Mammary epithelial cell (primary cell): ENCODE measurements at regions of chr7 and their contacts with region 1.

Region 1: GRCh38 chr7:139645572-139646523 is 122.4 kb downstream of the CLEC2L start:
- DNase-seq: peak; percentile 57
- H3K4me3 ChIP-seq: no peak overlapping the region
- H3K27ac ChIP-seq: no peak overlapping the region
- H3K4me1 ChIP-seq: peaks cover 5% of the 10 kb centered on the region
- H3K27me3 ChIP-seq: no peaks in the 10 kb centered on the region
- CTCF ChIP-seq: peak; percentile 85 to 94

Region 2: DNA sequence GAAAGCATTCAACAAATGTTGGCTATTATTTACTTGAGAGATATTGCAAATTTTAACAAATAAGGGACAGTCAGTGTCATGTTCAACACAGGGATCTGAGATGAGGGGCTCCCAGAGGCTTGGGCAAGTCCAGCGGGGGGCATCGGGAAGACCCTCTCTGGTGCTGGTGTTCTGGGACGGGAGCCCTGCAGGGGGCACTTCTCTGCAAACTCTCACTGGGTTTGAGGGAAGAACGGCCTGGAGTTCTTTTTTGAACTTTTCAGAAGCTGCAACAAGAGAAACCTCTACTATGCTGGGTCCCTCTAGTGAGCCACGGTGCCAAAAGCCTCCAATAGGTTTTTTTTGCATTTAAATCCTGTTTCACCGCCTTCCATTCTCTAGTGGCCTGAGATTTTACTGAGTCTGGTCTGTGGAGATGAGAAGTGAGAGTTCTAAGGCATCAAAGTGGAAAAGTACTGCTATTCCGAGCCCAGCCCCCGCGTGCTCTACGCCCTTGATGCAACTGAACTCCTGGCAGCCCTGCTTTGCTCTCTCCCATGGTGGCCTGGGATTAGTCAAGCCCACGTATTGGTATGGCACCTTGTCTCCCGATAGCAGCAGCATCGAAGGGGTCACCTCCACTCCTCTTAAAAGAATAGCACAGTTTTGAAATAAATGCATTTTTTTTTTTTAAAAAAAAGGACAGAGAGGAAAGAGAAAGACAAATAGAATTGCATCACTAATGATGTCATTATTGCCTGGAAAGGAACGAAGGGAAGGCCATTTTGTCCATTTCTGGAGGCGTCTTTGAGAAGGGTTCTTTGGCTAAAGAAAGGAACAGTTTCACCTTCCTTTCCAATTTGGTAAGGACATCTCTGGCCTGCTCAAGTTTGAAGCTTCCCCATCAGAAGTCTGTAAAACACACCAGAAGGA is 78.9 kb before region 1 on chr7:
- CTCF ChIA-PET with region 1: no interaction called
- dilution Hi-C with region 1: loop called (anchors 5 kb)
- in situ Hi-C with region 1: no loop called
- intact Hi-C with region 1: no loop called
- DNase-seq: no peak
- H3K4me3 ChIP-seq: no peak overlapping the region
- H3K27ac ChIP-seq: no peak overlapping the region
- H3K4me1 ChIP-seq: no peaks in the 10 kb centered on the region
- H3K27me3 ChIP-seq: no peaks in the 10 kb centered on the region
- CTCF ChIP-seq: no peak

Region 3: DNA sequence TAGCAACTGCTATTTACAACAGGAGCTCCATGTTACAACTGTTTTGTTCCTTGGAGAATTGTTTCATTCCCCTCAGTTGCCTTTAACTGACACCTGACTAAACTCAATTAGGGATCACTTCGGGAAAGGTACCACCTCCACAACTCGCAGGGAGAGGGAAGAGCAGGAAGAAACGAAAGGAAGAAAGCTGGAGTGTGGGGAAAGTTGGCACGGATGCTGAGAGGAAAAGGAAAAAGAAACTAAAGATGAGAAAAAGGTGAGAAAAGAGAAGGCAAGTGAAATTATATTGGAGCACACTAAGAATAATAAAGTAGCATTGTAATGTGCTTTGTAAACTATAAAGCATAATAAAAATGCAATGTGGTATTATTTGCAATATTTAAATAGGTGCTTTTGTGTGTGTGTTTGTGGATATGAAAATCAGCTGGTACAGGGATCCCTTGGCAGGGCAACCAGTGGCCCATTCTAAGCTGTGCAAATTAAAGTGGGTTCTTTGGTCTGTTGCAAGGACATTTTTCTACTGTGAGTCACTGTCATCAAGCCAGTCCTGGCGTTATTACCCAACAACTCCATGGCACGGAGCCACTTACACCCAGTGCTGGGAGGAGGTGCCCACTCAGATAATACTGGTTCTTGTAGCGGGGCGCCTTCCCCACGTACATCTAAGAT is 86.1 kb after region 1 on chr7:
- CTCF ChIA-PET with region 1: no interaction called
- dilution Hi-C with region 1: no loop called
- in situ Hi-C with region 1: no loop called
- intact Hi-C with region 1: loop called (anchors 5 kb)
- DNase-seq: peak; percentile 87
- H3K4me3 ChIP-seq: peak overlapping the region in 2 of 3 experiments; percentile 15 to 28
- H3K27ac ChIP-seq: peak overlapping the region; percentile 55
- H3K4me1 ChIP-seq: peaks cover 67% of the 10 kb centered on the region
- H3K27me3 ChIP-seq: no peaks in the 10 kb centered on the region
- CTCF ChIP-seq: no peak

Region 4: GRCh38 chr7:139753081-139753692 is 107.3 kb after region 1 on chr7:
- CTCF ChIA-PET with region 1: no interaction called
- dilution Hi-C with region 1: no loop called
- in situ Hi-C with region 1: no loop called
- intact Hi-C with region 1: no loop called
- DNase-seq: no peak
- H3K4me3 ChIP-seq: no peak overlapping the region
- H3K27ac ChIP-seq: no peak overlapping the region
- H3K4me1 ChIP-seq: no peaks in the 10 kb centered on the region
- H3K27me3 ChIP-seq: no peaks in the 10 kb centered on the region
- CTCF ChIP-seq: peak in 1 of 2 donors; percentile 9

Region 5: DNA sequence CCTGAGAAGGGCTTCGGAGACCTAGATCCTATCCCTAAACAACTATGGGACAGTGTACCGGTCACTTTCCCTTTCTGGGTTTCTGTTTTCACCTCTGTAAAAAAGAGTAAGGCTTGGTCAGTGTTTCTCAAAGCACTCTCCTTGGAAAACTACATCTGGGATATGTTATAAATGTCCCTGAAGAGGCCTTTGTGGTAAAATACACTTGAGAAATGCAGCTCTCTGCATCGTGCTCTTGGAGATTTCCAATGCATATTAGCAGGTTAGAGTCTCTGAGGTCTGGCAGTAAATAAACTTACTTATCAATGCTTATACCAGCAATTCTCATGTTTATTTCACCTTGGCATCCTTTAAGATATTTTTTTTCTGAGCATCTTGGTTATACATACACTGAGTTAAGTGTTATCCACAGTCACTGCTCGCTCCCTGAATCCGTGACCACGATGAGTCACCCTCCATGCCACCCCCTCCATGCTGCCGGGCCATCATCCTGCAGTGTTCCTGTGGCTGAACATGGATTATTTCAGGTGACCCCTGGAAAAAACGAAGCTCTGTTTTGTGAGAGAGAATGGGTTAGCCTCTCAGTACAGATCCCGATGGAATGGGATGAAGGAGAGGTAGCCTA is 179.9 kb after region 1 on chr7:
- CTCF ChIA-PET with region 1: no interaction called
- dilution Hi-C with region 1: no loop called
- in situ Hi-C with region 1: no loop called
- intact Hi-C with region 1: loop called (anchors 1 kb)
- DNase-seq: peak; percentile 49
- H3K4me3 ChIP-seq: no peak overlapping the region
- H3K27ac ChIP-seq: no peak overlapping the region
- H3K4me1 ChIP-seq: peaks cover 8% of the 10 kb centered on the region
- H3K27me3 ChIP-seq: no peaks in the 10 kb centered on the region
- CTCF ChIP-seq: no peak

Region 6: DNA sequence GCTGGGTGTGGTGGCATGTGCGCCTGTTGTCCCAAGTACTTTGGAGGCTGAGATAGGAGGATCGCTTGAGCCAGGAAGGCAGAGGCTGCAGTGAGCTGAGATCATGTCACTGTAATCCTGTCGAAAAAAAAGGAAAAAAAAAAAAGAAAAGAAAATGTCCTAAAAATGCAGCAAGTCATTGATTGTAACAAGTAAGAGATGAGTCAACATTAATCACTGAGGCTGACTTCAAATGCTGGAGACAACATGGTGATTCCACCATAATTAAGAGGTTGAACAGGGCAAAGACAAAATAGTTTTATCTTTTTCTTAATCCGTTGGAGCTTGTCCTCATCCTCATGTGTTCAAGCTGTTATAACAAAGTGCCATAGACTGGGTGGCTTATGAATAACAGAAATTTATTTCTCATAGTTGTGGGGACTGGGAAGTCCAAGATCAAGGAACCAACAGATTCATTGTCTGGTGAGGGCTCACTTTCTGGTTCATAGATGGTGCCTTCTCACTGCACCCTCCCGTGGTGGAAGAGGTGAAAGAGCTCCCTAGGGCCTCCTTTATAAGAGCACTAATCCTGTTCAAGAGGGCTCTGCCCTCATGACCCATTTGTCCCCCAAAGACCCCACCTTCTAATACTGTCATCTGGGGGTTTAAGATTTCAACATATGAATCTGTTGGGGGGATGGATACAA is 243.5 kb after region 1 on chr7:
- CTCF ChIA-PET with region 1: no interaction called
- dilution Hi-C with region 1: no loop called
- in situ Hi-C with region 1: no loop called
- intact Hi-C with region 1: loop called (anchors 5 kb)
- DNase-seq: peak; percentile 65
- H3K4me3 ChIP-seq: no peak overlapping the region
- H3K27ac ChIP-seq: peak overlapping the region; percentile 30
- H3K4me1 ChIP-seq: peaks cover 25% of the 10 kb centered on the region
- H3K27me3 ChIP-seq: no peaks in the 10 kb centered on the region
- CTCF ChIP-seq: no peak